Activated CD4-positive, alpha-beta memory T cell treated with anti-CD3 and anti-CD28 coated beads, Interleukin-2, amount 10 ng/mL, durations not matched to agents 7 days and 5 days (primary cell): ENCODE measurements at regions of chr11 and their contacts with region 1.

Region 1: GRCh38 chr11:117932067-117932370 is 2.8 kb upstream of the TMPRSS13 start:
- DNase-seq: peak; percentile 39
- H3K4me3 Mint-ChIP-seq: no peak overlapping the region
- H3K27ac Mint-ChIP-seq: peak overlapping the region; percentile 29
- H3K4me1 Mint-ChIP-seq: peaks cover 61% of the 10 kb centered on the region
- H3K27me3 Mint-ChIP-seq: peaks cover 14% of the 10 kb centered on the region

Region 2: DNA sequence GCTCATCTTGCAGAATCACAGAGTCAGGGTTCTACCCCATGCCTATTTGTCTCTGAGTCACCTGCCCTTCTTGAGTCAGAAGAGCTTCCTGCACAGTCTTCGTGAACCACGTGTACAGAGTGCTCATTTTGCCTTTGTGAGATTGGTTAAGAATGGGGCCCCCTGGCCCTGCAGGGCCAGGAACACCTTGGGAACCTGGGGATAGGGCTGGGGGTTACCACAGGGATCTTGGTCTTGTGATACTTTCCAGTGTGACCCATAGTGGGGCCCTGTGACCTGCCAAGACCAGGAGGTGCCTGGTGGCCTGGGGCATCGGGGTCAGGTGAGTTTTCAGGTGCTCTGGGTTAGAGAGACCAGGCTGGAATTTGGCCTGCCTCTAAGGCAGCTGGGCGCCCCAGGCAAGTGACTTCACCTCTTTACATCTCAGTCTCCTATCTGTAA is 12.2 kb before region 1 on chr11:
- CTCF ChIA-PET with region 1: interaction called, 4 read pairs
- POLR2A ChIA-PET with region 1: interaction called, 10 read pairs
- DNase-seq: no peak
- H3K4me3 Mint-ChIP-seq: no peak overlapping the region
- H3K27ac Mint-ChIP-seq: peak overlapping the region; percentile 29
- H3K4me1 Mint-ChIP-seq: peaks cover 9% of the 10 kb centered on the region
- H3K27me3 Mint-ChIP-seq: peaks cover 1% of the 10 kb centered on the region